ENCODE measurements at regions of chrX and their contacts with region 1.

Region 1: GRCh38 chrX:137194164-137194563 is 160.4 kb upstream of the GPR101 start:
- DNase-seq: peak; percentile 16
- ATAC-seq: peak; percentile 71
- H3K4me3 ChIP-seq: no peak overlapping the region
- H3K27ac ChIP-seq: no peak overlapping the region
- H3K4me1 ChIP-seq: no peaks in the 10 kb centered on the region
- H3K27me3 ChIP-seq: no peaks in the 10 kb centered on the region
- CTCF ChIP-seq: peak in 2 of 3 experiments; percentile 46 to 49; a peak in 4 of 6 replicates
- POLR2A ChIP-seq: no peak
- RAD21 ChIP-seq: peak; percentile 38

Region 2: GRCh38 chrX:136953867-136954787 is 240.0 kb before region 1 on chrX:
- CTCF ChIA-PET with region 1: no interaction called
- POLR2A ChIA-PET with region 1: no interaction called
- RAD21 ChIA-PET with region 1: no interaction called
- intact Hi-C with region 1: loop called (anchors 1 kb)
- DNase-seq: peak; percentile 40
- ATAC-seq: peak; percentile 91
- H3K4me3 ChIP-seq: no peak overlapping the region
- H3K27ac ChIP-seq: no peak overlapping the region
- H3K4me1 ChIP-seq: no peaks in the 10 kb centered on the region
- H3K27me3 ChIP-seq: no peaks in the 10 kb centered on the region
- CTCF ChIP-seq: peak; percentile 29 to 63 (median 53); a peak in 5 of 6 replicates
- POLR2A ChIP-seq: no peak
- RAD21 ChIP-seq: peak; percentile 41

Region 3: DNA sequence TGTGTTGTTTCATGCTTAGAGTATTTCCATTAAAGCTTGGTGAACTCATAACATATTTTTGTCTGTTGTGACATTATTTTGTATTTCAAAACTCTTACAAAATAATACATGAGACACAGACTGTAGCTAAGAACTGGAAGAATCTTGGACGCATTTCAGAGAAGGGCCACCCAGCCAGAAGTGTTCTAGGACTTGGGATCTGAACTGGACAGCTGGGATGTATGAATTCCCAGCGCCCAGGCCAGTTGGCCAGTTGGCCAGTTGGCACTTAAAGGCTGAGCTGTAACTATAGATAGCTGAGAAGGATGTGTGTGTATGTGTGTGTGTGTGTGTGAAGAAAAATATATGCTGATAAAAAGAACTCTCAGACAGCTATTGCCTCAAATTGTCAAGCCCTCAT is 33.0 kb after region 1 on chrX:
- CTCF ChIA-PET with region 1: no interaction called
- POLR2A ChIA-PET with region 1: no interaction called
- RAD21 ChIA-PET with region 1: no interaction called
- intact Hi-C with region 1: no loop called
- DNase-seq: no peak
- ATAC-seq: no peak
- H3K4me3 ChIP-seq: no peak overlapping the region
- H3K27ac ChIP-seq: no peak overlapping the region
- H3K4me1 ChIP-seq: no peaks in the 10 kb centered on the region
- H3K27me3 ChIP-seq: no peaks in the 10 kb centered on the region
- CTCF ChIP-seq: no peak
- POLR2A ChIP-seq: no peak
- RAD21 ChIP-seq: no peak

Region 4: DNA sequence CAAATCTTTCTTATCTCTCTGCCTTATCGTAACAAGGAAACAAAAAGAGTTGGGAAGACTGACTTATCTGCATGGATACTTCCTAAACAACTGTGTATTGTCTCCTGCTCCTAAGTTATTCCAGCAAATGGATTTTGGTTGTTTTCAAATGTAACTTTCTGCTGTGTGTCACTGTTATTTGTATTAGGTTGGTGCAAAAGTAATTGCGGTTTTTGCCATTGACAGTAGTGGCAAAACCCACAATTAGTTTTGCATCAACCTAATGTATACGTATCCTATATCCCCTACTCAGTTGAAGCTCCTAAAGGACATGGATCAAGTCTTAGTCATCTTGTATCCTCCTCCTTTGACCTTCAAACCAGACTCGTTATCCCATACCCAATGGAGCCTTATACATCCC is 103.0 kb after region 1 on chrX:
- CTCF ChIA-PET with region 1: no interaction called
- POLR2A ChIA-PET with region 1: no interaction called
- RAD21 ChIA-PET with region 1: no interaction called
- intact Hi-C with region 1: no loop called
- DNase-seq: no peak
- ATAC-seq: no peak
- H3K4me3 ChIP-seq: no peak overlapping the region
- H3K27ac ChIP-seq: no peak overlapping the region
- H3K4me1 ChIP-seq: no peaks in the 10 kb centered on the region
- H3K27me3 ChIP-seq: no peaks in the 10 kb centered on the region
- CTCF ChIP-seq: no peak
- POLR2A ChIP-seq: no peak
- RAD21 ChIP-seq: no peak

Measured in HCT116 (cell line).